ENCODE measurements at regions of chr10 and their contacts with region 1.

Region 1: GRCh38 chr10:103685880-103686669 is 169.3 kb downstream of the SH3PXD2A start:
- DNase-seq: peak; percentile 86
- H3K4me3 ChIP-seq: peak overlapping the region in 1 of 2 experiments; percentile 24; a peak in 1 of 4 replicates
- H3K27ac ChIP-seq: no peak overlapping the region
- H3K4me1 ChIP-seq: peaks cover 0 to 4% of the 10 kb centered on the region in 2 experiments; a peak in 1 of 4 replicates
- H3K27me3 ChIP-seq: no peaks in the 10 kb centered on the region
- CTCF ChIP-seq: peak; percentile 95
- EP300 ChIP-seq: no peak
- RAD21 ChIP-seq: peak; percentile 85

Region 2: DNA sequence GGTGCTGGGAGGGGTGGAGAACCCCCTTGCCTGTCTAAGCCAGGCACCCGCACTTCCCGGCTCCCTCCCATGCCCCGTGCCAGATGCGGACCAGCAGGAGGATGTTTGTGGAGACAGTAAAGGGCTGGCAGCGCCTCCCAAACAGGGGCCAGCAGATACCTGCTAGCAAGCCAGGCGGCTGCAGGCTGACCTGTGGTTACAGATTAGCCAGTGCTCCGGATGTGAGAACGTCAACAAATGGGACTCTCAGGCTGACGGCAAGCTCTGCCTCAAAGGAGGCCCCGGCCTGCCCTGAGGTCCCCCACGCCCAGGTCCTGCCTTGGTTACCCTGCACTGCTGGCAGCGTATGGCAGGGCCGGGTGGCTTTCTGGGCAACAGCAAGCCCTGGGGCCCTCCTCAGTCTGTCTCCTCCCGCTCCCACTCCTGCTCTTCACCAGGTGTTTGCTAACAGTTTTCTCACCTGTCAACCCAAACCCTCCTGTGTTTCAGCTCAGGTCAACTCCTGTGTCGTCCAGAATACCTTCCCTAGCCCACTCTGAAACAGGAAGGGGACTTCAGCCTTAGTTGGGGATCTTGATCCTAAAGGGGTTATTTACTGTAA is 107.2 kb before region 1 on chr10:
- CTCF ChIA-PET with region 1: interaction called, 15 read pairs
- POLR2A ChIA-PET with region 1: no interaction called
- DNase-seq: no peak
- H3K4me3 ChIP-seq: no peak overlapping the region
- H3K27ac ChIP-seq: no peak overlapping the region
- H3K4me1 ChIP-seq: peaks cover 0 to 15% of the 10 kb centered on the region in 2 experiments; a peak in 1 of 4 replicates
- H3K27me3 ChIP-seq: no peaks in the 10 kb centered on the region; the same call in 1 of the 2 replicates
- CTCF ChIP-seq: no peak
- EP300 ChIP-seq: no peak
- RAD21 ChIP-seq: no peak

Region 3: DNA sequence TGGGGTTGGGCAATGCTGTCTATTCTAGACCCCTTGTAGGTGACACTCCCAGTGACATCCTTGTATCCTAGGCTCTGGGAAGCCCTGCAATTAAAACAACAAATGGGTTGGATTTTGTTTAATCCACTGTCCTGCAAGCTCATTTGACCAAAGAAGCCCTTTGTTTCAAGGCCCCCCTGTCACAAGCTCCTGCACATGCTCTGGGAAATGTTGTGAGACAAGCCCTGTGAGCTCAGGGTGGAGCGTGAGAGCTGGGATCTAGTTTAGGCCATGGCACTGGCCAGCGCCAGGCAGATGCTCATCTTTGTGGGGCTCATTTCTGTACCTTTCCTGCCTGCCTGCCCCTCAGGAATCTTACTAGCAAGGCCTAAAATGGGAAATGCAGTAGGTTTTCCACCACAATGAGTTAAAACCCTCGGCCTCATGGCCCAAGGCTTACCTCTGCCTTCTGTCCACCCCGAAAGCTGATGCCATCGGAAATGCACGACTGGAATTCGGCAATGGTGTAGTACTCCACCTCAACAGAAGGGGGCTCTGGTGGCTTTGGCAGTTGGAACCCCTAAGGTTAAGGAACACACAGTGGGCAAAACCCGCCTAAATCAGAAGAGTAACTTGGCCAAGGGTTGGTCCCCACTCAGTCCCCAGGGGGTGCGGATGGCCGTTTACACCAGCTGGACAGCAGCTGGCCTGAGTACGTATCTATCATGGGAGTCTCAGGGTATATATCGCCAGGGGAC is 80.5 kb before region 1 on chr10:
- CTCF ChIA-PET with region 1: interaction called, 91 read pairs
- POLR2A ChIA-PET with region 1: no interaction called
- DNase-seq: peak; percentile 79
- H3K4me3 ChIP-seq: no peak overlapping the region
- H3K27ac ChIP-seq: peak overlapping the region in 1 of 2 experiments; percentile 1; a peak in 1 of 4 replicates
- H3K4me1 ChIP-seq: peaks cover 0 to 25% of the 10 kb centered on the region in 2 experiments; a peak in 2 of 4 replicates
- H3K27me3 ChIP-seq: no peaks in the 10 kb centered on the region
- CTCF ChIP-seq: peak; percentile 72
- EP300 ChIP-seq: no peak
- RAD21 ChIP-seq: peak; percentile 77

Region 4: DNA sequence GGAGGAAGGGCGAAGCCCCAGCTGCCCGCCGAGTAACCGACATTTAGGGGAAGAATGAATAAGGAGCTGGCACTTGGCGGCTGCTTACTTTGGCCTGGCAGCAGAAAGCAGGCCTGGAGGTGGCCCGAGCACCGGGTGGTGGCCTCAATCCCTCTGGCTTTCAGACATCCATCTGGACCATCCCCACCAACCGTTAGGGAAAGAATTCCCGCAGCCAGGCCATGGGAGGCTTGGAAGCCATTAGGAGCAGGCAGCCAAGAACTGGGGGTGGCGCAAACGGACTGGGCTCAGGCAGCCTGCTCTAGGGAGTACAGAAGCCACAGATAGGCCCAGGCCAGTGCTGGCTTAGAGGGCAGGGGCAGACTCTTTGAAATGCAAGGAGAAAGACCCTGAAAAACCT is 59.9 kb before region 1 on chr10:
- CTCF ChIA-PET with region 1: interaction called, 25 read pairs
- POLR2A ChIA-PET with region 1: interaction called, 4 read pairs
- DNase-seq: no peak
- H3K4me3 ChIP-seq: no peak overlapping the region
- H3K27ac ChIP-seq: no peak overlapping the region; a peak in 1 of 4 replicates
- H3K4me1 ChIP-seq: peaks cover 0 to 80% of the 10 kb centered on the region in 2 experiments; a peak in 2 of 4 replicates
- H3K27me3 ChIP-seq: no peaks in the 10 kb centered on the region
- CTCF ChIP-seq: no peak
- EP300 ChIP-seq: no peak
- RAD21 ChIP-seq: no peak

Region 5: GRCh38 chr10:103658049-103658577 is 28.0 kb before region 1 on chr10:
- CTCF ChIA-PET with region 1: interaction called, 12 read pairs
- POLR2A ChIA-PET with region 1: no interaction called
- DNase-seq: no peak
- H3K4me3 ChIP-seq: no peak overlapping the region
- H3K27ac ChIP-seq: no peak overlapping the region
- H3K4me1 ChIP-seq: peaks cover 0 to 10% of the 10 kb centered on the region in 2 experiments; a peak in 1 of 4 replicates
- H3K27me3 ChIP-seq: no peaks in the 10 kb centered on the region
- CTCF ChIP-seq: no peak
- EP300 ChIP-seq: no peak
- RAD21 ChIP-seq: no peak

Region 6: GRCh38 chr10:103712570-103713498 is 26.8 kb after region 1 on chr10:
- CTCF ChIA-PET with region 1: interaction called, 52 read pairs
- POLR2A ChIA-PET with region 1: no interaction called
- DNase-seq: peak; percentile 73
- H3K4me3 ChIP-seq: no peak overlapping the region
- H3K27ac ChIP-seq: no peak overlapping the region
- H3K4me1 ChIP-seq: peaks cover 30 to 59% of the 10 kb centered on the region in 2 experiments; a peak in 2 of 4 replicates
- H3K27me3 ChIP-seq: no peaks in the 10 kb centered on the region
- CTCF ChIP-seq: peak; percentile 88
- EP300 ChIP-seq: no peak
- RAD21 ChIP-seq: peak; percentile 98

Measured in SK-N-SH (cell line).